ENCODE measurements at regions of chr13 and their contacts with region 1.

Region 1: DNA sequence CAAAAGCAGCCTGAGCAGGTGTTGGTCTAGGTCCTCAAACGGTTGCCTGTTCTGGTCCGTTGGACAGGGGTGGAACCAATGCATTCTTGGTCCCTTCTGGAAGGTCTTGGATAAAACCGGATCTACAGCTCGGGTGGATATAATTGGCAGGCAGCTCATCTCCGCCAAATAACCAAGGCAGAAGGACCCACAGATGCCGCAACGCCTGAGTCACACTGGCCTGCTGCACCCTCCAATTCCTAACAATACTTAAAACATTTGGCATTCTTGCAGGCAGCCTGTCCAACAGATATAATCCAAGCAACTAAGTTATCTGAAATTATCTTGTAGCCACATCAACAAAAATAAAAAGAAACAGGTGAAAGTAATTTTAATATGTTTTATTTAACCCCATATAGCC is 59.0 kb upstream of the FGF14 start:
- DNase-seq: no peak
- H3K4me3 ChIP-seq: no peak overlapping the region
- H3K27ac ChIP-seq: no peak overlapping the region
- H3K4me1 ChIP-seq: no peaks in the 10 kb centered on the region
- H3K27me3 ChIP-seq: no peaks in the 10 kb centered on the region
- CTCF ChIP-seq: no peak
- EP300 ChIP-seq: no peak
- POLR2A ChIP-seq: no peak

Region 2: GRCh38 chr13:101942038-101942437 is 518.8 kb before region 1 on chr13:
- intact Hi-C with region 1: loop called (anchors 5 kb)
- DNase-seq: peak in 1 of 2 donors; percentile 79
- H3K4me3 ChIP-seq: no peak overlapping the region
- H3K27ac ChIP-seq: no peak overlapping the region
- H3K4me1 ChIP-seq: no peaks in the 10 kb centered on the region
- H3K27me3 ChIP-seq: no peaks in the 10 kb centered on the region
- CTCF ChIP-seq: peak in 5 of 7 experiments; percentile 25 to 67 (median 56)
- EP300 ChIP-seq: no peak
- POLR2A ChIP-seq: no peak

Measured in stomach (tissue), 19 donors.